ENCODE measurements at regions of chr11 and their contacts with region 1.

Region 1: GRCh38 chr11:5684646-5685362 is at the start of gene TRIM5:
- DNase-seq: peak; percentile 93
- H3K4me3 ChIP-seq: peak within 1 kb of the TSS; percentile 34 to 42
- H3K27ac ChIP-seq: peak within 1 kb of the TSS; percentile 94
- H3K4me1 ChIP-seq: peaks cover 2% of the 10 kb centered on the region
- H3K27me3 ChIP-seq: no peaks in the 10 kb centered on the region
- CTCF ChIP-seq: peak in 3 of 4 experiments; percentile 66 to 73 (median 71)
- POLR2A ChIP-seq: peak; percentile 53
- total RNA-seq, gene TRIM5: 17.4 to 36.9 TPM

Region 2: GRCh38 chr11:5596607-5597201 is 88.1 kb before region 1 on chr11 and contains the start of gene TRIM6:
- intact Hi-C with region 1: loop called (anchors 5 kb)
- DNase-seq: peak; percentile 26
- H3K4me3 ChIP-seq: peak within 1 kb of the TSS; percentile 38 to 44
- H3K27ac ChIP-seq: peak within 1 kb of the TSS; percentile 56 to 78
- H3K4me1 ChIP-seq: no peaks in the 10 kb centered on the region
- H3K27me3 ChIP-seq: no peaks in the 10 kb centered on the region
- CTCF ChIP-seq: no peak
- POLR2A ChIP-seq: no peak
- total RNA-seq, gene TRIM6: 4.8 to 6.3 TPM

Region 3: DNA sequence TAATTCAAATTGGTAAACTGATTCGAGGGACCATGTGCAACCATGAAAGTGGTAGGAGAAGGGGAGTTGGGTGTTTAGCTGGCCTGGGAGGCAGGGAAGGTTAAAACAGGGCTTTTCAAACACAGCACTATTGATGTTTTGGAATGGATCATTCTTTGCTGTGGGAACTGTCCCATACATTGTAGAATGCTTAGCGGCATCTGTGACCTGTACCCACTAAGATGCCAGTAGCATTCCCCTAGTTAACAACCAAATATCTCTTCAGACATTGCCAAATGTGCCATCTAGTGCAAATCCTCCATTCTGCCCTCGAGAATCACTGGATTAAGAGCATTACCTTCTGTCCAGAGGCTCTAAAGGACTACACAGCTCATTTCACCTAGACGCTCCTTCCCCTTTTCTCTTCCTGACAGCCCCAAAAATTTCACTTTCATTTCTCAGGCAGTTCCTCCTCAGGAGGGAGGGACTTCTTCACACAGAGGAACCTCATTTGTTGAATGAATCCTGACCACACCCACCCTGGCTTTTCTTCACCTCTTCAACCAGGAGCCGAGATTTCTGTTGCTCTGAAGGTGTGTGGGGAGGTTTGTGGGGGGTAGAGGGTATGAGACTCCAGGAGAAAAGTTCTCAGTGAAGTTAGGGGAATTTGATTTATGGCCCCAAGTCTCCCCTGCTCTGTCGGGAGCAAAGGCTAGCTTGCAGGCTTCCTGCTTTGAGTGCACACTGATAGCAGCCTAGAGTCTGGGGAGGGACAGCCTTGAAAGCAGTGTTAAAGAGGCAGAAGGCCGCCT is 60.1 kb before region 1 on chr11 and contains the start of gene TRIM34:
- intact Hi-C with region 1: loop called (anchors 10 kb)
- DNase-seq: peak; percentile 76
- H3K4me3 ChIP-seq: peak within 1 kb of the TSS; percentile 36 to 45
- H3K27ac ChIP-seq: peak within 1 kb of the TSS; percentile 40 to 43
- H3K4me1 ChIP-seq: no peaks in the 10 kb centered on the region
- H3K27me3 ChIP-seq: no peaks in the 10 kb centered on the region
- CTCF ChIP-seq: no peak
- POLR2A ChIP-seq: peak; percentile 56
- total RNA-seq, gene TRIM34: 10.3 to 15.5 TPM

Measured in prostate gland (tissue), 2 donors.